ENCODE measurements at regions of chr1 and their contacts with region 1.

Region 1: DNA sequence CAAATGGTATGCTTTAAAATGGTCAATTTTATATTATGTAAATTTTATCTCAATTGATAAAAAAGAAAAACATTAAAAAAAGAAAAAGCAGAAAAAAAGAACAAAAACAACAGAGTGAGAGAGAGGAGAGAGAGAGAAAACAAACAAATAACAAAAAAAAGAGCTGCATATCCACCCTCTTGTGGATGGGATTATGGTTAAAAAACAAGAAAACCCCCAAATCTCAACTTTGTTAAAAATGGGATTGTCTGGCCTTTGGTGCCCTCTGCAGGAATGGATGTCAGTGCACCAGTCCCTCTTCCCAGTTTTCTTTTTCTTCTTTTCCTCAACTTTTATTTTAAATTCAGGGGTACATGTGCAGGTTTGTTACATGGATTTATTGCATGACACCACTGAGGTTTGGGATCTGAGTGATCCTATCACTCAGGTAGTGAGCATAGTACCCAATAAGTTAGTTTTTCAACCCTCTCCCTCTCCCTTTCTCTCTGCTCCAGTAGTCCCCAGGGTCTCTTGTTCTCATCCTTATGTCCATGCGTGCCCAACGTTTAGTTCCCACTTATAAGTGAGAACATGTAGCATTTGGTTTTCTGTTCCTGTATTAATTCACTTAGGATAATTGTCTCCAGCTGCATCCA is 28.1 kb downstream of the RNF187 start:
- DNase-seq: no peak
- H3K4me3 Mint-ChIP-seq: no peak overlapping the region
- H3K27ac Mint-ChIP-seq: no peak overlapping the region
- H3K4me1 Mint-ChIP-seq: peaks cover 12% of the 10 kb centered on the region
- H3K27me3 Mint-ChIP-seq: peaks cover 46% of the 10 kb centered on the region

Region 2: DNA sequence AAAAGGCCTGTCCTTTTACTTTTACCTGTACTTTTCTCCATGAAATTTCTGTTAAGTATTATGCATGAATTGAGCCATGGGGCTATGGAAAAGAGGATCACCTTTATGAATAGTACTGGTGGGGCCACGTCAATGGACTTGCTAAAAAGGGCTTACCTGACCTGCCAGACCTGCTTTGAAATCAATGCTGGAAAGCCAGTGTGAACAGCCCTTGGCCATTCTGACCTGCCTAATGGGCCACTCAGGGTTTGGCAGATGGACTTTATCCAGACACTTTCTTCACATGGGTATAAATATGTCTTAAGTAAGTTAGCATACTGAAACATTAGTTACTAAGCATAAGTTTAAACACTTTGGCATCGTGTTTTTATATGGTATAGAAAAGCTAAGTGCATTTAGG is 383.6 kb before region 1 on chr1:
- intact Hi-C with region 1: loop called (anchors 2 kb)
- DNase-seq: no peak
- H3K4me3 Mint-ChIP-seq: no peak overlapping the region
- H3K27ac Mint-ChIP-seq: no peak overlapping the region
- H3K4me1 Mint-ChIP-seq: peaks cover 4% of the 10 kb centered on the region
- H3K27me3 Mint-ChIP-seq: peaks cover 34% of the 10 kb centered on the region

Region 3: GRCh38 chr1:228212966-228213844 is 302.1 kb before region 1 on chr1:
- intact Hi-C with region 1: loop called (anchors 1 kb)
- DNase-seq: peak; percentile 82
- H3K4me3 Mint-ChIP-seq: peak overlapping the region; percentile 89
- H3K27ac Mint-ChIP-seq: peak overlapping the region; percentile 93
- H3K4me1 Mint-ChIP-seq: peaks cover 4% of the 10 kb centered on the region
- H3K27me3 Mint-ChIP-seq: no peaks in the 10 kb centered on the region

Region 4: DNA sequence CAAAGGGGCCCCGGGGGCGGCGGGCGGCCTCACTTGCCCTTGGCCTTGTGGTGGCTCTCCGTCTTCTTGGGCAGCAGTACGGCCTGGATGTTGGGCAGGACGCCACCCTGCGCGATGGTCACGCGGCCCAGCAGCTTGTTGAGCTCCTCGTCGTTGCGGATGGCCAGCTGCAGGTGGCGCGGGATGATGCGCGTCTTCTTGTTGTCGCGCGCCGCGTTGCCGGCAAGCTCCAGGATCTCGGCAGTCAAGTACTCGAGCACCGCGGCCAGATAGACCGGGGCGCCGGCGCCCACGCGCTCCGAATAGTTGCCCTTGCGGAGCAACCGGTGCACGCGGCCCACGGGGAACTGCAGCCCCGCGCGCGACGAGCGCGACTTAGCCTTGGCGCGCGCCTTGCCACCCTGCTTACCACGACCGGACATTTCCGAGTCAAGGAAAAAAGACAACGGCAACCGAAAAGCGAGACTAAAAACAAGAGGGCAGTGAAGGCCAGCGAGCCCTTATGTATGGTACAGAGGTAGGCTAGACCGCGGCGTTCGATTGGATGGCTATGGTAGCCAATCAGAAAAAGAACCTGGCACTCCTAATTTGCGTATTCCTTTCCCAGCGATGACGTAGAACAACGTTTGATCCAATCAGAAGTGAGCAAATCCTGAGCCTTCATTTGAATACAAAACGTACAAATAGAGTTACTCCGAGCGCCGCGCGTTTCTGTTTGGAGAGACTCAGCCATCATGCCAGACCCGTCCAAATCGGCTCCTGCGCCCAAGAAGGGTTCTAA is 57.7 kb before region 1 on chr1:
- intact Hi-C with region 1: no loop called
- DNase-seq: peak; percentile 89
- H3K4me3 Mint-ChIP-seq: peak overlapping the region; percentile 98
- H3K27ac Mint-ChIP-seq: peak overlapping the region; percentile 99
- H3K4me1 Mint-ChIP-seq: peaks cover 42% of the 10 kb centered on the region
- H3K27me3 Mint-ChIP-seq: no peaks in the 10 kb centered on the region

Region 5: DNA sequence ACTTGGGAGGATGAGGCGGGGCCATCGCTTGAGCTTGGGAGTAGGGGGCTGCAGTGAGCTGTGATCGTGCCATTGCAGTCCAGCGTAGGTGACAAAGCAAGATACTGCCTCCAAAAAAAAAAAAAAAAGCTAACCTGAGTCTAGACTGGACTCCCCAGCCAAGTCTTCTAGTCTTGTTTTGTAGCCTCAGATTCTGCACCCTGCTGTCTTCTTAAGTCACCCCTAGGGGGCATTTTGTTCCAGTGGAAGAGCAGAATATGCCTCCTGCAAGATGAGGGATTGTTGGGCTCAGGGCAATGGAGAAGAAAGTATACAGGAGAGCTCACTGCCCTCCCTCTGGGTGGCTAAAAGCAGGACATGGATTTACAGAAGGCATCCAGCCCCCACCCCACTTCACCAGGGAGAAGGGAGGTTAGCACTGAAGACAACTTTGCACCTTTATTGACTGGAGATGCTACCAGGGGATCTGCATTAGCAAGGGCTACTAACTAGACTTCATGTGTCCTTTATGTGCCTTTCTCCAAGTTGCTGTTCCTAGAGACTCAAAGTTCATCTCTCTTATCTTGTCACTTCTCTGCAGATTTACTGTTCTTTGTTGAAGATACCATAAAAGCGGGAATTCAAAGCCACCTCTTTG is 43.4 kb before region 1 on chr1:
- intact Hi-C with region 1: loop called (anchors 1 kb)
- DNase-seq: no peak
- H3K4me3 Mint-ChIP-seq: no peak overlapping the region
- H3K27ac Mint-ChIP-seq: peak overlapping the region; percentile 70
- H3K4me1 Mint-ChIP-seq: peaks cover 30% of the 10 kb centered on the region
- H3K27me3 Mint-ChIP-seq: peaks cover 3% of the 10 kb centered on the region

Region 6: DNA sequence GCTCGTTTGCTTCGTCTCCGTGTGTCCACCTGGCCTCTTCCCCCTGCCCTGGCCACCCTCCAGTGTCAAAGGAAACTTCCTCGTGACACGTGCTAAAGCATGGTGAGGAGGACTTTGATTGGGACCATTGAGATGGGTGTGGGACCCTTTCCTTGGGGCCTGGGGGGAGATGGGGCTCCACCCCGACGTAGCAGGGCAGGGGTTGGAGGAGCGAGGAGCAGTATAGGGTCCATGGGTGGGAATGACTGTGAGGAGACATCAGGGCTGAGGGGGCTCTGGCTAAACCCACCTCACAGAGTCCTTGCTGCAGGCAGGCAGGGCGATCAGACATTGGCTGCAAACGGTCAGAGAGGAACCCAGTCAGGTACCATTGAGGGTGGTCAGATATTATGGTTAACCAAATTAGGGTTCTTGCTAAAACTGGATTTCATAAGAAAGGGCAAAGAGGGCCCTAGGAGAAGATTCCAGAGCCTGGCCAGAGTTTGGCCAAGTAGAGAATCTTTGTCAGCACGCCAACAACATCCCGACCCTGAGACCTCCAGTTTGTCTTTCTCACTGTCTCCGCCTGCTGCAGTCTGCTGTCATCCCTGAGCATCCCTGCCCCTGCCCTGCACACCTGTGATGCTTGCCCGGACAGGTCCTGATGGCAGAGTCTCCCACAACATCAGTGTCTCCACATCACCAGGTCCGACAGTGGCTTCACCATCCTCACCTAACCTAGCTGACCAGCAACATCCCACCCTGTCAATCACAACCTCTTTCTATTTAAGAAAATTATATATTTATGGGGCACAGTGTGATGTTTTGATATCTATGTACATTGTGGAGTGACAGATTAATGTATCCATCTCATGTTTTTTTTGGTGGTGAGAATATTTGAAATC is 20.1 kb before region 1 on chr1:
- intact Hi-C with region 1: no loop called
- DNase-seq: no peak
- H3K4me3 Mint-ChIP-seq: no peak overlapping the region
- H3K27ac Mint-ChIP-seq: no peak overlapping the region
- H3K4me1 Mint-ChIP-seq: peaks cover 35% of the 10 kb centered on the region
- H3K27me3 Mint-ChIP-seq: no peaks in the 10 kb centered on the region